Sciatic nerve (tissue), 2 donors: ENCODE measurements at regions of chr1 and their contacts with region 1.

Region 1: GRCh38 chr1:246506674-246507481 is at the start of gene SMYD3:
- DNase-seq: peak; percentile 83
- ATAC-seq: peak; percentile 97
- total RNA-seq, gene SMYD3: 27.7 TPM

Region 2: GRCh38 chr1:246699095-246699735 is 192.3 kb after region 1 on chr1:
- intact Hi-C with region 1: loop called (anchors 10 kb)
- DNase-seq: peak; percentile 92
- ATAC-seq: peak; percentile 92